MCF 10A (cell line): ENCODE measurements at regions of chr14 and their contacts with region 1.

Region 1: GRCh38 chr14:23120541-23121251 is 1.6 kb upstream of the CEBPE start:
- DNase-seq: peak; percentile 83
- H3K4me3 Mint-ChIP-seq: no peak overlapping the region
- H3K27ac Mint-ChIP-seq: no peak overlapping the region
- H3K4me1 Mint-ChIP-seq: peaks cover 21% of the 10 kb centered on the region
- H3K27me3 Mint-ChIP-seq: no peaks in the 10 kb centered on the region
- CTCF ChIP-seq: peak; percentile 100

Region 2: GRCh38 chr14:23068476-23069412 is 52.0 kb before region 1 on chr14:
- CTCF ChIA-PET with region 1: interaction called, 15 read pairs
- POLR2A ChIA-PET with region 1: interaction called, 3 read pairs
- intact Hi-C with region 1: no loop called
- DNase-seq: peak; percentile 93
- H3K4me3 Mint-ChIP-seq: peak overlapping the region; percentile 50
- H3K27ac Mint-ChIP-seq: no peak overlapping the region
- H3K4me1 Mint-ChIP-seq: peaks cover 26% of the 10 kb centered on the region
- H3K27me3 Mint-ChIP-seq: no peaks in the 10 kb centered on the region
- CTCF ChIP-seq: peak; percentile 94

Region 3: DNA sequence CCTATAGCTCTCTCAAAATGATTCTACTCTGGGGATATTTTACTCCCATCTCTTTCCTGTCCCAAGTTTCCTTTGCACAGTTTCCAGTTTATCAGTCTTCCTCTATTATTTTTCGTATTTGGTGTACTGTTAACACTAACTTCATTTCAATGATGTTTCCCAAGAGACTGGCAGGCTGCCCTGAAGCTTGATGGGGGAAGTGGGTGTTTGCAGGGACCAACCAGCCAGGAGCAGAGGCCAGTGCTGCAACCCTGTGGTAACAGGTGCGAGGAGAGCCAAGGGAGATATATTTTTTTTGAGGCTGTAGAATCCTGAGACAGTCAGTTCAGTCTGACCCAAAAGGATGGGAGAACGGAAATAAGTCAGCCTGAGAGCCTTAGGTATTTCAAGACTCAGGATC is 10.2 kb after region 1 on chr14:
- CTCF ChIA-PET with region 1: interaction called, 37 read pairs
- POLR2A ChIA-PET with region 1: interaction called, 5 read pairs
- intact Hi-C with region 1: no loop called
- DNase-seq: peak; percentile 74
- H3K4me3 Mint-ChIP-seq: no peak overlapping the region
- H3K27ac Mint-ChIP-seq: no peak overlapping the region
- H3K4me1 Mint-ChIP-seq: peaks cover 26% of the 10 kb centered on the region
- H3K27me3 Mint-ChIP-seq: no peaks in the 10 kb centered on the region
- CTCF ChIP-seq: no peak

Region 4: DNA sequence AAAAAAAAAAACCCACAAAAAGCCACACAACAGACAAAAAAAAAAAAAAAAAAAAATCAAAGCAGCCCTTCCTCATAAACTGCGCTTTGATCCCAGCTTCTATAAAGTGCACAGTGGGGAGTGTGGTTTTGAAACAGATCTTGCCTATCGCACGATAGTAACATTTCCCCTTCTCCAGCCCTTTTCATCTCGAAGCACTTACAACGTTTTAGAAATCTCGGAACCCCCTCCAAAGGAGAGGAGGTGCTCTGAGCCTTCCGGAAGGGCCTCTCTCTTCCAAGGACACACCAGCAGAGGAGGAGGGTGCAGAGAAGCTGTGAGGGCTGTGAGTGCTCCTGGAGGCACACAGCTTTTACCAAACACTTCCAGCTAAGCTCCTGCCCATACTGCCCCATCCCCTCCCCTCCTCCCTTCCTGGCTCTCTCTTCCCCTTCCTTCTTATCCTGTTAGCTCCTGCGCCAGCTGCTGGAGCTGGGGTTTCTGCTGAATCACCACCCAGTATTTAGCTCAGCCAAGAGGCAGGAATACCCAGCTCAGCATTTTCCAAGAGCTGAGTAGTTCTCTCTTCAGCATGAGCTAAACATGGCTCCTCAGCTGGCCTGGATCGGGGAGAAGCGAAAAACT is 34.4 kb after region 1 on chr14:
- CTCF ChIA-PET with region 1: interaction called, 35 read pairs
- POLR2A ChIA-PET with region 1: interaction called, 6 read pairs
- intact Hi-C with region 1: loop called (anchors 2 kb)
- DNase-seq: peak; percentile 64
- H3K4me3 Mint-ChIP-seq: peak overlapping the region; percentile 52
- H3K27ac Mint-ChIP-seq: peak overlapping the region; percentile 49
- H3K4me1 Mint-ChIP-seq: peaks cover 37% of the 10 kb centered on the region
- H3K27me3 Mint-ChIP-seq: no peaks in the 10 kb centered on the region
- CTCF ChIP-seq: no peak

Region 5: DNA sequence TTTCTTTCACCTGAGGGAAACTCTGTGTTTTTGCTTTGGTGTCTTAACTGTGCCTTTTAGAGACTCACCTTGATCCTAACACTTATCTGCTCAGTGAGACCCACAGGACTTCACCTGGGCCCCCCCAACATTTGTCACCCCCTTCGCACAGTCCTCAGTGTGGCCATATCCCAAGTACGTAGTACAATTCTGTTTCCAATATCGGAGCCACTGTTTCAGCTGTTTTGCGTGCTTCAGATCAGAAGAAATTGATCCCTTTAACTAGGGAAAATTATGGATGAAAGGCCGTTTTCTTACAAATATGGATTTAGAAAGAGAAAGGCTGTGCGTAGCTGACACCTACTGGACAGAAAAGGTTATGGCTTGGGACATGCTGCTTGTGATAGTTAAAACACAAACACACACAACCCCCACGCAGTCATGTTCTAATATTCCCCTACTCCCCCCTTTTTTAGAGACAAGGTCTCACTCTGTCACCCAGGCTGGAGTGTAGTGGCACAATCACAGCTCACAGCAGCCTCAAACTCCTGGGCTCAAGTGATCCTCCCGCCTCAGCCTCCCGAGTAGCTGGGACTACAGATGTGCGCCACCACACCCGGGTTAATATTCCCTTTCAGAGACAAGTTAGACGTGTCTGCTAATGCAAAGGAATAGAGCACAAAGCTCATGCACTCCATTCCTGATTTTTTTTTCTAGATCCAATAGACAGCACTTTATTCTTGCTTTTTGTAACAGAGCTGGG is 66.4 kb after region 1 on chr14:
- CTCF ChIA-PET with region 1: interaction called, 766 read pairs
- POLR2A ChIA-PET with region 1: interaction called, 78 read pairs
- intact Hi-C with region 1: loop called (anchors 1 kb)
- DNase-seq: peak; percentile 68
- H3K4me3 Mint-ChIP-seq: no peak overlapping the region
- H3K27ac Mint-ChIP-seq: no peak overlapping the region
- H3K4me1 Mint-ChIP-seq: peaks cover 5% of the 10 kb centered on the region
- H3K27me3 Mint-ChIP-seq: no peaks in the 10 kb centered on the region
- CTCF ChIP-seq: peak; percentile 78

Region 6: GRCh38 chr14:23209651-23210423 is 89.1 kb after region 1 on chr14:
- CTCF ChIA-PET with region 1: interaction called, 13 read pairs
- POLR2A ChIA-PET with region 1: interaction called, 3 read pairs
- intact Hi-C with region 1: no loop called
- DNase-seq: peak; percentile 91
- H3K4me3 Mint-ChIP-seq: peak overlapping the region; percentile 34
- H3K27ac Mint-ChIP-seq: peak overlapping the region; percentile 94
- H3K4me1 Mint-ChIP-seq: peaks cover 11% of the 10 kb centered on the region
- H3K27me3 Mint-ChIP-seq: no peaks in the 10 kb centered on the region
- CTCF ChIP-seq: no peak